CD8-positive, alpha-beta T cell (primary cell): ENCODE measurements at regions of chr15 and their contacts with region 1.

Region 1: GRCh38 chr15:40470423-40471104 is at the start of gene CHST14:
- DNase-seq: peak; percentile 19 to 78 (median 57)
- ATAC-seq: peak; percentile 86
- H3K4me3 ChIP-seq: peak within 1 kb of the TSS; percentile 77 to 88
- H3K4me3 Mint-ChIP-seq: peak within 1 kb of the TSS; percentile 89
- H3K27ac ChIP-seq: peak within 1 kb of the TSS; percentile 52 to 82
- H3K27ac Mint-ChIP-seq: peak within 1 kb of the TSS; percentile 85
- H3K4me1 ChIP-seq: peaks cover 25% of the 10 kb centered on the region
- H3K4me1 Mint-ChIP-seq: peaks cover 15% of the 10 kb centered on the region
- H3K27me3 ChIP-seq: no peaks in the 10 kb centered on the region
- H3K27me3 Mint-ChIP-seq: no peaks in the 10 kb centered on the region
- CTCF ChIP-seq: no peak
- total RNA-seq, gene CHST14: 3.7 to 4.1 TPM

Region 2: GRCh38 chr15:40454904-40455391 is 15.6 kb before region 1 on chr15:
- CTCF ChIA-PET with region 1: interaction called, 5 read pairs
- POLR2A ChIA-PET with region 1: interaction called, 4 read pairs
- intact Hi-C with region 1: loop called in 1 of 2 experiments (anchors 2 kb)
- DNase-seq: peak in 4 of 9 experiments; percentile 24 to 55 (median 37)
- ATAC-seq: peak; percentile 38
- H3K4me3 ChIP-seq: no peak overlapping the region
- H3K4me3 Mint-ChIP-seq: peak overlapping the region; percentile 81
- H3K27ac ChIP-seq: peak overlapping the region; percentile 11 to 56
- H3K27ac Mint-ChIP-seq: peak overlapping the region; percentile 90
- H3K4me1 ChIP-seq: peaks cover 76% of the 10 kb centered on the region
- H3K4me1 Mint-ChIP-seq: peaks cover 71% of the 10 kb centered on the region
- H3K27me3 ChIP-seq: no peaks in the 10 kb centered on the region
- H3K27me3 Mint-ChIP-seq: no peaks in the 10 kb centered on the region
- CTCF ChIP-seq: no peak

Region 3: DNA sequence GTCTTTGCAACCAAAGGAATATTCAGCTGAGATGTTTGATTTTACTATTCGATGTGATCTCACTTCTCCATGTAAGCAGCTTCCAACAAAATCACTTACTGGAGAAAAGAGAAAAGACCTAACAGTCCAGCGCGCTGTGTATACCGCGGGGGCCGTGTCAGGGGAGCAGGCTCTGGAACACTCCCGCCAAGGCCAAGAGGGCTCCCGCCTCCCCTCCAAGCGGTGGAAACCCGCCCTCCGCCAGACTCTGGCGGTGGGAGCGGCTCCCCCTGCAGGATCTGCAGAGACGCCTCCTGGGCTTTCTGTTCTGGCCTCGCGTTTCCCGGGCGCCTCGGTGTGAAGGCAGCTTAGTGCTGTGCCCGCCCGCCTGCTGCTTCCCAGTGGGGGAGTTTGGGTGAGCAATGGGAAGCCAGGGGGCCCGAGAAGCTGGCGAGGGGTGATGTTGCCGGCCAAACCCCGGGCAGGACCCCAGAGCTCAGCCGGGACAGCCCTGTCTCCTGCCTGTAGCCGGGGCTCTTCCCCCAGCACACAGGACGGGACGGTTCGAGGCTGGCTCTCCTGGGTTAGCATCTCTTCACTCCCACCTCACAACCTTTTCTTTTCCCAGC is 36.5 kb after region 1 on chr15:
- CTCF ChIA-PET with region 1: no interaction called
- POLR2A ChIA-PET with region 1: no interaction called
- intact Hi-C with region 1: loop called in 1 of 2 experiments (anchors 5 kb)
- DNase-seq: peak; percentile 18 to 80 (median 65)
- ATAC-seq: peak; percentile 74
- H3K4me3 ChIP-seq: peak overlapping the region in 1 of 2 experiments; percentile 8
- H3K4me3 Mint-ChIP-seq: no peak overlapping the region
- H3K27ac ChIP-seq: no peak overlapping the region
- H3K27ac Mint-ChIP-seq: no peak overlapping the region
- H3K4me1 ChIP-seq: peaks cover 20% of the 10 kb centered on the region
- H3K4me1 Mint-ChIP-seq: peaks cover 22% of the 10 kb centered on the region
- H3K27me3 ChIP-seq: peaks cover 18 to 19% of the 10 kb centered on the region in 2 experiments
- H3K27me3 Mint-ChIP-seq: peaks cover 59% of the 10 kb centered on the region
- CTCF ChIP-seq: peak; percentile 61

Region 4: GRCh38 chr15:40873625-40874561 is 403.3 kb after region 1 on chr15 and contains the start of gene RHOV:
- CTCF ChIA-PET with region 1: no interaction called
- POLR2A ChIA-PET with region 1: no interaction called
- intact Hi-C with region 1: no loop called
- DNase-seq: peak in 8 of 9 experiments; percentile 21 to 71 (median 58)
- ATAC-seq: peak; percentile 85
- H3K4me3 ChIP-seq: peak within 1 kb of the TSS; percentile 36 to 59
- H3K4me3 Mint-ChIP-seq: peak within 1 kb of the TSS; percentile 86
- H3K27ac ChIP-seq: no peak within 1 kb of the TSS
- H3K27ac Mint-ChIP-seq: no peak within 1 kb of the TSS
- H3K4me1 ChIP-seq: peaks cover 7% of the 10 kb centered on the region
- H3K4me1 Mint-ChIP-seq: peaks cover 5% of the 10 kb centered on the region
- H3K27me3 ChIP-seq: peaks cover 0 to 12% of the 10 kb centered on the region in 2 experiments
- H3K27me3 Mint-ChIP-seq: peaks cover 14% of the 10 kb centered on the region
- CTCF ChIP-seq: peak; percentile 18
- total RNA-seq, gene RHOV: 0.24 to 0.25 TPM